ENCODE measurements at regions of chr11 and their contacts with region 1.

Region 1: GRCh38 chr11:69443138-69443967 is 38.1 kb upstream of the LINC01488 start:
- DNase-seq: peak; percentile 92 to 94
- ATAC-seq: peak; percentile 88 to 96 (median 92)
- H3K4me3 ChIP-seq: peak overlapping the region in 9 of 10 donors; percentile 7 to 56 (median 50)
- H3K27ac ChIP-seq: peak overlapping the region; percentile 77 to 99 (median 88)
- H3K4me1 ChIP-seq: peaks cover 19 to 48% (median 36%) of the 10 kb centered on the region in 9 donors
- H3K27me3 ChIP-seq: no peaks in the 10 kb centered on the region
- CTCF ChIP-seq: no peak

Region 2: GRCh38 chr11:69101115-69101791 is 342.1 kb before region 1 on chr11:
- intact Hi-C with region 1: loop called in 1 of 10 experiments (anchors 10 kb)
- DNase-seq: peak; percentile 64 to 78
- ATAC-seq: peak; percentile 80 to 89 (median 83)
- H3K4me3 ChIP-seq: no peak overlapping the region
- H3K27ac ChIP-seq: no peak overlapping the region
- H3K4me1 ChIP-seq: peaks cover 3 to 20% (median 15%) of the 10 kb centered on the region in 9 donors
- H3K27me3 ChIP-seq: peaks cover 0 to 5% (median 0%) of the 10 kb centered on the region in 7 donors
- CTCF ChIP-seq: peak in 8 of 9 donors; percentile 97 to 100 (median 99)

Region 3: DNA sequence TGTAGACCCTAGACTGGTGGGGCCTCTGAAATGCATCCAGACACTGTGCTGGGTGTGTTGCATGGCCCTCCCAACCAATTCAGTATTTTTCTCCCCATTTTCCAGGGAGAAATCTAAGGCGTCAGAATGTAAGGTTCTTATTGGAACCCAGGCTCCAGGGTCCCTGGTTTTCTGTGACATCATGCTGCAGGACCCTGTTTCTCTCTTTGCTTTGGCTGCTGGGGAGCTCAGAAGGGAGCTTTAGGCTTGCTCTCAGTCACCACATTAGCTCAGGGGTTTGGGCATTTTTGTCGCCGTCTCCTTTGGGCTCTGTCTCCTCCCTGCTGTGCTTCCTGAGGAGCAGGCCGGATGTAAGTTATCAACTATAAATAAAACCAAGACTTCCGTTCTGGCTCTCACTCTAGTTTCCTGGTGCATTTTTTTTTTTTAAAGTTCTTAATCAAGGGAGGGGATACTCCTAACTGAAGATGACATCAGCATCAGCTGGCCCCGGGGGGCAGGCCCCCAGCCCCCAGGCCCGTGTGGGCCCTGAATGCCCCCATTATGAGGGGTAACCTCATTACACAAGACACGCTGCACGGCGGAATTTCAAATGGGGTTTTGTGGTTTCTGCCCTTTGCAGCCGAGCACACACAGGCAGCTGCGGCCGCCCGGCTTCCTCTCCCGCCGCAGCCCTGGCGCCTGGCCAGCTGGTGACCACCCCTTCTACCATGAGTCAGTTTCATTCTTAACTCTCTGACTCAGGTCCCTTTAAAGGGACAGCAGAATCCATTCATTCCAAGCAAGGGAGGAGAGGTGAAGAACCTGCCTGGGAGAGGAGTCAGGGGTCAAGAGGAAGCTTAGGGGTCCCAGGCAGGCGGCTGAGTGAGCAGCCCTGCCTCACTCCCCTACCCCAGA is 146.2 kb before region 1 on chr11:
- intact Hi-C with region 1: loop called in 7 of 10 experiments (anchors 2 to 10 kb)
- DNase-seq: peak; percentile 95
- ATAC-seq: peak; percentile 73 to 95 (median 89)
- H3K4me3 ChIP-seq: peak overlapping the region in 8 of 10 donors; percentile 6 to 37 (median 26)
- H3K27ac ChIP-seq: peak overlapping the region; percentile 17 to 94 (median 83)
- H3K4me1 ChIP-seq: peaks cover 26 to 79% (median 56%) of the 10 kb centered on the region in 9 donors
- H3K27me3 ChIP-seq: no peaks in the 10 kb centered on the region
- CTCF ChIP-seq: no peak

Region 4: DNA sequence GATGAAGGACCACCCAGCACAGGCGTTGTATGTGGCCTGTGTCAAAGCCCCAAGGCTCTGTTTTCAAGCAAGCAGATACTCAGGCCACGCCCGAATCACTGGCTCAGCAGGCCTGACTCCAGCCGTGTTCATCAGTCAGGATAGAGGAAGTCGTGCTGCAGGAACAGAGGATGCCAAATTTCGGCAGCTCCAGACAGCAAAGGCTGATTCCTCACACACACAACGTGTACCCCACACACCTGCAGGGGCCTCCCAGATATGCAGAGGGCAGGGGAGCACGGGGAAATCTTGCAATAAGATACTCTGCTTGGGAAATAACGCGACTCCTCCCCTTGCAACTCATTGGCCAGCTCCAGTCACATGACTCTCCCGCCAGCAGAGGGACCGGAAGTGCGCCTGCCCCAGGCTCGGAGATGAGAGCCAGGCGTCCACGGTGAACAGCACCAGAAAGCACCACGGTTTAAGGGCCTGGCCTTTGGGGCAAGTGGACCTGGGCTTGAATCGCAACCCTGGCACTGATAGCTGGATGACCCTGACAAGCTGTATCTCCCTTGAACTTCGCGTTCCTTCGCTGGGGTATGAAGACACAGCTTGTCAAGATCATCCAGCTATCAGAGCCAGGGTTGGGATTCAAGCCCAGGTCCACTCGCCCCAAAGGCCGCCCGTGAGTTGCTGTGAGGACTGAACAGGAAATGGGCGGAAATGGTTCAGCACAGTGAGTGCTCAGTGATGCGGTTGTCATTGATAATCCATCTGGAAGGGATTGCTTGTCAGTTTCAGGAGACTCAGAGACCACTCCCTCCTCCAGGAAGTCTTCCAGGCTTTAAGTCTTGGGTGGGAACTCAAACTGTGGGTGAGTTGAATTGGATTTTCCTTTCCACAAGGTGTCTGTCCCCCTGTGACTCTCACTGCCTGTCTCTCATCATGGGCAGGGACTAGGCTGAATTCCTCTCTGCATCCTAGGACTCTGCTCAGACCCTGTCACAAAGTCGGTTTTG is 60.9 kb before region 1 on chr11:
- intact Hi-C with region 1: loop called in 2 of 10 experiments (anchors 2 to 5 kb)
- DNase-seq: peak; percentile 42 to 43
- ATAC-seq: peak in 7 of 8 donors; percentile 41 to 84 (median 72)
- H3K4me3 ChIP-seq: peak overlapping the region in 5 of 10 donors; percentile 7 to 32 (median 22)
- H3K27ac ChIP-seq: peak overlapping the region in 6 of 10 donors; percentile 21 to 64 (median 38)
- H3K4me1 ChIP-seq: peaks cover 0 to 11% (median 0%) of the 10 kb centered on the region in 9 donors
- H3K27me3 ChIP-seq: peaks cover 0 to 6% (median 0%) of the 10 kb centered on the region in 7 donors
- CTCF ChIP-seq: no peak

Region 5: GRCh38 chr11:69497221-69497787 is 54.0 kb after region 1 on chr11:
- intact Hi-C with region 1: loop called in 1 of 10 experiments (anchors 5 kb)
- DNase-seq: peak; percentile 84 to 88
- ATAC-seq: peak; percentile 94 to 97 (median 95)
- H3K4me3 ChIP-seq: no peak overlapping the region
- H3K27ac ChIP-seq: peak overlapping the region; percentile 63 to 92 (median 90)
- H3K4me1 ChIP-seq: peaks cover 16 to 55% (median 35%) of the 10 kb centered on the region in 9 donors
- H3K27me3 ChIP-seq: no peaks in the 10 kb centered on the region
- CTCF ChIP-seq: no peak

Region 6: DNA sequence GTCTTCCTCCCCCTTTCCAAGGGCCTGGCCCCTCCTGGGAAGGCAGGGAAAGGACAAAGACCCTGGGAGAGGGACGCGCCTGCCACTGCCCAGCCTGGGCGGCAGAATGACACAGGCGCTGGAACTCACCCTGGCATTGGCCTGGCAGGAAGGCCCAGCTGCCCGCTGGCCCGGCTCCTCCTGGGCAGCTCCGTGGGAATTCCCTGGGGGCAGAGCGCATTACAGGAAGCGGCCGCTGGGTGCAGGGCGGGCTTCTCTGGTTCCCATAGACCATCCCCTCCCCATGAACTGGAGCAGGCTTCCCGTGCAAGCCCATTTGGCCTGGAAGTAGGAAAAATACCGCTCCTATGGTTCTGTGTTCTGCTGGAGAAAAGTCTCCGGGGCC is 96.8 kb after region 1 on chr11:
- intact Hi-C with region 1: loop called in 1 of 10 experiments (anchors 10 kb)
- DNase-seq: peak; percentile 59 to 70
- ATAC-seq: peak; percentile 59 to 88 (median 72)
- H3K4me3 ChIP-seq: peak overlapping the region in 5 of 10 donors; percentile 9 to 41 (median 29)
- H3K27ac ChIP-seq: peak overlapping the region in 9 of 10 donors; percentile 57 to 86 (median 71)
- H3K4me1 ChIP-seq: peaks cover 0 to 44% (median 36%) of the 10 kb centered on the region in 9 donors
- H3K27me3 ChIP-seq: peaks cover 0 to 7% (median 0%) of the 10 kb centered on the region in 7 donors
- CTCF ChIP-seq: peak in 3 of 9 donors; percentile 3 to 24 (median 23)